Activated CD4-positive, alpha-beta T cell treated with anti-CD3 and anti-CD28 coated beads for 36 hours (primary cell): ENCODE measurements at regions of chr10 and their contacts with region 1.

Region 1: GRCh38 chr10:129971381-129972144 is 7.5 kb upstream of the EBF3 start:
- DNase-seq: peak; percentile 78
- ATAC-seq: peak; percentile 79
- H3K4me3 Mint-ChIP-seq: peak overlapping the region; percentile 38
- H3K27ac Mint-ChIP-seq: no peak overlapping the region
- H3K4me1 Mint-ChIP-seq: peaks cover 9% of the 10 kb centered on the region
- H3K27me3 Mint-ChIP-seq: peaks cover 62% of the 10 kb centered on the region

Region 2: GRCh38 chr10:128211953-128212727 is 1759.4 kb before region 1 on chr10:
- CTCF ChIA-PET with region 1: no interaction called
- POLR2A ChIA-PET with region 1: no interaction called
- intact Hi-C with region 1: loop called in 1 of 2 experiments (anchors 1 kb)
- DNase-seq: peak; percentile 91
- ATAC-seq: peak; percentile 90
- H3K4me3 Mint-ChIP-seq: peak overlapping the region; percentile 65
- H3K27ac Mint-ChIP-seq: peak overlapping the region; percentile 51
- H3K4me1 Mint-ChIP-seq: peaks cover 8% of the 10 kb centered on the region
- H3K27me3 Mint-ChIP-seq: no peaks in the 10 kb centered on the region

Region 3: GRCh38 chr10:128631801-128632241 is 1339.7 kb before region 1 on chr10:
- CTCF ChIA-PET with region 1: no interaction called
- POLR2A ChIA-PET with region 1: no interaction called
- intact Hi-C with region 1: loop called in 1 of 2 experiments (anchors 5 kb)
- DNase-seq: no peak
- ATAC-seq: no peak
- H3K4me3 Mint-ChIP-seq: no peak overlapping the region
- H3K27ac Mint-ChIP-seq: no peak overlapping the region
- H3K4me1 Mint-ChIP-seq: peaks cover 3% of the 10 kb centered on the region
- H3K27me3 Mint-ChIP-seq: peaks cover 4% of the 10 kb centered on the region

Region 4: DNA sequence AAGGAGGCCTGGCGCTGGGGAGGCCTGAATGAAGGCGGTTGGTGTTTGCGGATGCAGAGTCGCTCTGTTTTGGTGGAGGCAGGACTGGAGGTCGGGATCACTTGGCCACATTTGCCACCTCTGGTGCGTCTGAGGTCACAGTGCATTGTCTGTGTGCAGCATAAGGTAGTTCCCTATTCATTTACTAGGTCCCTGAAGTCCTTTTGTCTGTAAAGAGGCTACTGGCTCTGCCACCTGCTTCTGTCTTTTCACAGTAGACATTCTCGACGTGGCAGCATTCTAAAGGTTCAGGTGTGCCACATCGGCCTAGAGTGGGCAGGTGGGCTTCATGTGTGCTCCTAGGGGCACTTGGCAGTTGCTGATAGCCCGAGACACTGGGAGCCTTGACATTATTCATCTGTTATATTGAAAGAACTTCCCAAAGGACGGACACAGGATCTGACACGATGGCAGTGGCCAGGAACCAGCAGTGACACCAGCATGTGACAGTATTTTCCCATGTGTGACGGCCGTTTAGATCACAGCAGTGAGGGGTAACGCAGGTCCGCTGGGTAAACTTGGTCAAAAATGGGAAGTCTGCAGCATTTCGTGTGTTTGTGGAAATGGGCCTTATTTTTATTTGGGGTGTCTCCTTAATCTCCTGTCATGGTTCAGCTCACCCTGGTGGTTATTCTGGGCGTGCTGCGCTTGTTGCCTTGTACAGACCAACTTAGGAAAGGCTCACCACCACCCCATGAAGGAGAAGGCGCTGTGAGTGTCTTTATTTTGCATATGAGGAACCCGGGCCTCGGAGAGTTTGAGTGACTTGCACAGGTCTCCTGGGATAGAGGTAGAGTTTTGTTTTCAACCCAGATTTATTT is 498.6 kb before region 1 on chr10:
- CTCF ChIA-PET with region 1: no interaction called
- POLR2A ChIA-PET with region 1: no interaction called
- intact Hi-C with region 1: no loop called
- DNase-seq: no peak
- ATAC-seq: no peak
- H3K4me3 Mint-ChIP-seq: no peak overlapping the region
- H3K27ac Mint-ChIP-seq: no peak overlapping the region
- H3K4me1 Mint-ChIP-seq: peaks cover 11% of the 10 kb centered on the region
- H3K27me3 Mint-ChIP-seq: no peaks in the 10 kb centered on the region

Region 5: DNA sequence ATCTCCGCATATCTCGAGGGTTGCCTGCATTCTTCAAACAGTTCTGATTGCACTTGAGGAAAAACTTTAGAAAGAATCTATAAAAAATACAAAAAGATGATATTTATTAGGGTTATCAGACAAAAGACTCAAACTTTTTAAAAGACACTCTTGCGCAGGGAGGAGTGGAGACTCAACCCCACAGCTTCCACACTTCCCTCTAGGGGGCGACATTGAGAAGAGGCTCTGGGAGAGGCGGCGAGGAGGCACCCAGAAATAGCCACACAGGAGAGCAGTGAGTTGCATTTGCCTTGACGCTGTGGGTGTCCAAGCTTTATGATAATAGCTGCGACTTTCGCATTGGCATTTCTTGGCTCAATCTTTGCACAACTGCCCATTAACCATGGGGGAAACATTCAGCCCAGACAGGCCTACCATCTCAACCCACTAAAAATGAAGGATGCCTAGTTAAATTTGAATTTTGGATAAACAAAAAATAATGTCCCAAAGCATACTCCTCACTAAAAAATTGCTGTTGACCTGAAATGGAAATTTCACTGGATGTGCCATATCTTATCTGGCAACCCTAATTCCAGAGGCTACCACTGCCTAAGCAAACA is 93.7 kb before region 1 on chr10:
- CTCF ChIA-PET with region 1: interaction called, 5 read pairs
- POLR2A ChIA-PET with region 1: no interaction called
- intact Hi-C with region 1: loop called in 1 of 2 experiments (anchors 1 kb)
- DNase-seq: peak; percentile 62
- ATAC-seq: no peak
- H3K4me3 Mint-ChIP-seq: no peak overlapping the region
- H3K27ac Mint-ChIP-seq: no peak overlapping the region
- H3K4me1 Mint-ChIP-seq: no peaks in the 10 kb centered on the region
- H3K27me3 Mint-ChIP-seq: peaks cover 4% of the 10 kb centered on the region

Region 6: GRCh38 chr10:129912166-129912917 is 59.2 kb before region 1 on chr10:
- CTCF ChIA-PET with region 1: no interaction called
- POLR2A ChIA-PET with region 1: no interaction called
- intact Hi-C with region 1: no loop called
- DNase-seq: no peak
- ATAC-seq: no peak
- H3K4me3 Mint-ChIP-seq: no peak overlapping the region
- H3K27ac Mint-ChIP-seq: no peak overlapping the region
- H3K4me1 Mint-ChIP-seq: no peaks in the 10 kb centered on the region
- H3K27me3 Mint-ChIP-seq: no peaks in the 10 kb centered on the region

Region 7: GRCh38 chr10:129955601-129956285 is 15.8 kb before region 1 on chr10:
- CTCF ChIA-PET with region 1: interaction called, 6 read pairs
- POLR2A ChIA-PET with region 1: no interaction called
- intact Hi-C with region 1: loop called (anchors 2 kb)
- DNase-seq: no peak
- ATAC-seq: no peak
- H3K4me3 Mint-ChIP-seq: no peak overlapping the region
- H3K27ac Mint-ChIP-seq: no peak overlapping the region
- H3K4me1 Mint-ChIP-seq: peaks cover 13% of the 10 kb centered on the region
- H3K27me3 Mint-ChIP-seq: peaks cover 52% of the 10 kb centered on the region

Region 8: DNA sequence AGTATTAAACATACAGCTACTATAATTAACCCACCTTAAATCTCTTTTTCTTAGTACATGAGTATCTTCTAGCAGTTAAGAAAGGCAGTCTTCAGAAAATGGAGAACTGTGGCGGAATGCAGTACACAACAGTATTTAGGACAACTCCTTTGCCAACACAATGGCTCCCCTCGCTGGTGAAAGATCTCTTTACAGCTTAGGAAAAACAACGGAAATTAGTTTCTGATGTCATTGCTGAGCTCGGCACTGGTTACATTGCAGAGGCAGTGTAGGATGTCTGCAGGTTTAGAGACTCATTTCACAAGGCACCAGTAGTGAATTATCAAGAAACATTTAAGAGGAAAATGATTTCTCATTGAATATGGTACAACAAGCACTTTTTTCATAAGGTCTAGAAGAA is 208.1 kb after region 1 on chr10:
- CTCF ChIA-PET with region 1: interaction called, 3 read pairs
- POLR2A ChIA-PET with region 1: interaction called, 3 read pairs
- intact Hi-C with region 1: loop called (anchors 2 to 10 kb)
- DNase-seq: peak; percentile 70
- ATAC-seq: peak; percentile 84
- H3K4me3 Mint-ChIP-seq: no peak overlapping the region
- H3K27ac Mint-ChIP-seq: peak overlapping the region; percentile 59
- H3K4me1 Mint-ChIP-seq: peaks cover 14% of the 10 kb centered on the region
- H3K27me3 Mint-ChIP-seq: no peaks in the 10 kb centered on the region